ENCODE measurements at regions of chr18 and their contacts with region 1.

Region 1: GRCh38 chr18:23503038-23503962 is at the start of gene RMC1:
- DNase-seq: peak; percentile 97
- H3K4me3 Mint-ChIP-seq: peak within 1 kb of the TSS; percentile 92
- H3K27ac Mint-ChIP-seq: peak within 1 kb of the TSS; percentile 88
- H3K4me1 Mint-ChIP-seq: peaks cover 44% of the 10 kb centered on the region
- H3K27me3 Mint-ChIP-seq: no peaks in the 10 kb centered on the region
- total RNA-seq, gene RMC1: 26.2 to 29.7 TPM

Region 2: DNA sequence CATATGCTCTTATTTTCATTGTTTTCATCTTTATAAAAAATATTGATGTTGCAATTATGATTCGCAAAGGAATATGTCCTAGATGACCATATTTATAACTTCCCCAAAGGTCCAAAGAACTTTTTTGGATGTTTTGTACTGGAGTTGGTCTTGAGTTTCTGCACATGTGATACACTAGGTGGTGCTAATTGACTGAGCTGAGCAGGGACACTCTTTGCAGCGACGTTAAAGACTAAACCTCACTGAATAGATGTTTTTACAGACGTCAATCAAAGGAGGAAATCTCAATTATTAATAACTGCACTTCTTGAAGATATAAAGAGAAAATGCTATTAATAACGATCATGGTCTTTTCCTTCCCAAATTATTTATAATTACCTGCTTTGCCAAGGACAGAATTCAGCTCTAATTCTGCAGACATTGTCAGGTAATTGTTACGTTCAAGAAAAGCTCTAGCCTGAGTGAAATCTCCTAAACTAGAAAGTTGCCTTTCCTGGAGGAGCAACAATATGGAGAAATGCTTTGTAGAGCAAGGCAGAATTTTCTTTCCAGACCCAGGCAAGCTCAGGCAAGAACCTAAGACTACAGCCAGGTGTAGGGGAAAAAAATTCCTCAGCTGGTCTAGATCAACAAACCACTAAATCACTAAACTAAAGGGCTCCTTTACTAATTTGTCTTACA is 689.5 kb before region 1 on chr18:
- CTCF ChIA-PET with region 1: no interaction called
- intact Hi-C with region 1: loop called (anchors 10 kb)
- DNase-seq: peak; percentile 35
- H3K4me3 Mint-ChIP-seq: no peak overlapping the region
- H3K27ac Mint-ChIP-seq: no peak overlapping the region
- H3K4me1 Mint-ChIP-seq: peaks cover 4% of the 10 kb centered on the region
- H3K27me3 Mint-ChIP-seq: peaks cover 17% of the 10 kb centered on the region

Region 3: DNA sequence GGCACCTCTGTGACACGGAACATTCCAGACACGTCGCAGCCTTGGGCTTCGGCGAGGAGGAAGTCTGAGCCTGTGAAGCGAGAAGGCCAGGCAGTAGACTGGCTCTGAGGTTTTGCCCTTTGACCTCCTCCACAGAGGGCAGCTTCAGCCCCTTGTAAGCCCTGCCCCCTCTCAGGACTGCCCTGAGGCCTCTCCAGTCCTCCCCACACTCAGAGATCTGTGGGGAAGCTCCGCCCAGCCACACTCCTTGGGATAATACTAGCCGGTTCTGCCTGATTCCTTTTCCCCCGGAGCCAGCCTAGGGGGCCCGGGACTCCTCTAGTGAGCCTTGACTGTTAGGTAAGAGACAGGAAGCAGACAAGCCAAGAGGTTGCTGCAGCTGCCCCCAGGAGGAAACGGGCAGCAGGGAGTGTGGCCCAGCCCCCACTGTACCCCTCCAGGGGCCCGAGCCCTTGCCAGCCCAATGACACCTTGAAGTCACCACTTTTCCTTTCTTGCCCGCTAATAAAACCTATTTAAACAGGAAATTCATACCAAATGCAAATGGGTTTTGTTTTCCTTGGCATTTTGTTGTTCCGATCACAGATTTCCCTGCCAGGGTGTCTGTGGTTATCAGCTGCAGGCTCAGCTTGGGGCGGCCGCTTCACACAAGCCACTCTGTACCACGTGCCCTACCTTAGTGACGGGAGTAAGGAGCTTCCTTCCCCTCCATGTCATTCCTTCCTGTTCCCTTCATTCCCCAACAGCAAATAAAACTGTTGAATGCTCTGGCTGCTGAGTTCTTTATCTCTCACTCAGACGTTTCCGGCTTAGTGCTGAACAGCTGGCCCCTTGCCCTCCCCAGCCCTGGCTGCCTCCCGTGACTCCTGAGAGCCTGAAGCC is 243.4 kb before region 1 on chr18:
- CTCF ChIA-PET with region 1: no interaction called
- intact Hi-C with region 1: loop called (anchors 10 kb)
- DNase-seq: peak; percentile 43
- H3K4me3 Mint-ChIP-seq: peak overlapping the region; percentile 34
- H3K27ac Mint-ChIP-seq: peak overlapping the region; percentile 61
- H3K4me1 Mint-ChIP-seq: peaks cover 35% of the 10 kb centered on the region
- H3K27me3 Mint-ChIP-seq: no peaks in the 10 kb centered on the region

Region 4: DNA sequence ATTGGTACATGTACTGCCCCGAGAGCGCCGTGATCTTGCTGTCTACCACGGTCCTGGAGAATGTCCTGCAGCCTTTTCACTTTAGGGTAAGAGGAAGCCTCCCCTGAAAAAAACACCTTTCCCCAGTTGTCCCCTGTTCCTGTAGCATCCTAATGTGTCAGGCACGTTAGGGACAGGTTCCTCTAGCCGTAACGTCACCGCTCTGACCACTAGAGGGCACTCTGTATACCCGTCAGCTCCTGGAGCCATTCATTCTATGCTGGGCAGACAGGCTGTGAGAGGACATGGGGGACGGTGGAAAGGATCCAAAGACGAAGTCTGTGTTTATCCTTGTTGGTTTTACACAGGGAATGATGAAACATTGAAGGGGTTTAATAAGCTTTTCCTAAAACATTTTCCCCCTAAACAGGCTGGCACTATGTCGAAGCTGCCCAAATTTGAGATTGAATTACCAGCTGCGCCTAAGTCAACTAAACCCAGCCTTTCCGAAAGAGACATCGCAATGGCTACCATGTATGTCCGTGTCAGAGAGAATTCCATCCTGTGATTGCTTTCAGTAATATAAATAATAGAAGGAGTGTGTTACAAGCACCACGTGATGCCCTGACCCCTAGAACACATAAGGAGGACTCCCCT is 12.7 kb after region 1 on chr18:
- CTCF ChIA-PET with region 1: interaction called, 16 read pairs
- intact Hi-C with region 1: no loop called
- DNase-seq: peak; percentile 89
- H3K4me3 Mint-ChIP-seq: no peak overlapping the region
- H3K27ac Mint-ChIP-seq: peak overlapping the region; percentile 60
- H3K4me1 Mint-ChIP-seq: peaks cover 7% of the 10 kb centered on the region
- H3K27me3 Mint-ChIP-seq: no peaks in the 10 kb centered on the region

Region 5: GRCh38 chr18:23689031-23689615 is 185.8 kb after region 1 on chr18 and contains the start of gene LAMA3:
- CTCF ChIA-PET with region 1: no interaction called
- intact Hi-C with region 1: loop called (anchors 5 kb)
- DNase-seq: peak; percentile 40
- H3K4me3 Mint-ChIP-seq: peak within 1 kb of the TSS; percentile 60
- H3K27ac Mint-ChIP-seq: no peak within 1 kb of the TSS
- H3K4me1 Mint-ChIP-seq: peaks cover 5% of the 10 kb centered on the region
- H3K27me3 Mint-ChIP-seq: peaks cover 31% of the 10 kb centered on the region
- total RNA-seq, gene LAMA3: 0.05 to 0.10 TPM

Region 6: GRCh38 chr18:24014062-24014985 is 511.0 kb after region 1 on chr18 and contains the start of gene TTC39C:
- CTCF ChIA-PET with region 1: no interaction called
- intact Hi-C with region 1: loop called (anchors 5 kb)
- DNase-seq: peak; percentile 87
- H3K4me3 Mint-ChIP-seq: peak within 1 kb of the TSS; percentile 91
- H3K27ac Mint-ChIP-seq: peak within 1 kb of the TSS; percentile 89
- H3K4me1 Mint-ChIP-seq: peaks cover 69% of the 10 kb centered on the region
- H3K27me3 Mint-ChIP-seq: no peaks in the 10 kb centered on the region
- total RNA-seq, gene TTC39C: 39.9 to 44.2 TPM